A673 (cell line): ENCODE measurements at regions of chr12 and their contacts with region 1.

Region 1: DNA sequence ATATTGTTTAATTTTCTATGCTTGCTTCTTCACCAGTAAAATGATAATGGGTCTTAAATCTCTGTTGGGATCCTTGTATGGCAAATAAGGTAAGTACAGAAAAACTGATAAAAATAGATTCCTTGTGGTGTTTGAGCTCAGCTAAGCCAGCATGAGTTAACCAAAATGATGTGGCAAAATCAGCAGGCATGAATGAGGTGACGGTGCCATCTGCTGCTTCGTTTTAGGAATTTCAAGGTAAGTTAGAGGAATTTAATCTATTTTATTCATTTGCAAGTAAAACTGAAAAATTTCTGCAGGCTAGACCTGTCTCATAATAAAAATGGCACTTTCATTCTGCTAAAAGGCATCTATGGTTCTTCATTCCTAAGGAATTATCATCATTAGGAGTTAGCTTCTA is 10.0 kb upstream of the CLEC7A start:
- DNase-seq: peak; percentile 64
- H3K4me3 ChIP-seq: no peak overlapping the region
- H3K27ac ChIP-seq: no peak overlapping the region
- H3K4me1 ChIP-seq: no peaks in the 10 kb centered on the region
- H3K27me3 ChIP-seq: no peaks in the 10 kb centered on the region
- CTCF ChIP-seq: peak; percentile 61

Region 2: GRCh38 chr12:9797722-9798619 is 342.0 kb before region 1 on chr12:
- CTCF ChIA-PET with region 1: no interaction called
- POLR2A ChIA-PET with region 1: no interaction called
- intact Hi-C with region 1: no loop called
- DNase-seq: peak; percentile 53
- H3K4me3 ChIP-seq: no peak overlapping the region
- H3K27ac ChIP-seq: no peak overlapping the region
- H3K4me1 ChIP-seq: peaks cover 12% of the 10 kb centered on the region
- H3K27me3 ChIP-seq: no peaks in the 10 kb centered on the region
- CTCF ChIP-seq: peak; percentile 50

Region 3: DNA sequence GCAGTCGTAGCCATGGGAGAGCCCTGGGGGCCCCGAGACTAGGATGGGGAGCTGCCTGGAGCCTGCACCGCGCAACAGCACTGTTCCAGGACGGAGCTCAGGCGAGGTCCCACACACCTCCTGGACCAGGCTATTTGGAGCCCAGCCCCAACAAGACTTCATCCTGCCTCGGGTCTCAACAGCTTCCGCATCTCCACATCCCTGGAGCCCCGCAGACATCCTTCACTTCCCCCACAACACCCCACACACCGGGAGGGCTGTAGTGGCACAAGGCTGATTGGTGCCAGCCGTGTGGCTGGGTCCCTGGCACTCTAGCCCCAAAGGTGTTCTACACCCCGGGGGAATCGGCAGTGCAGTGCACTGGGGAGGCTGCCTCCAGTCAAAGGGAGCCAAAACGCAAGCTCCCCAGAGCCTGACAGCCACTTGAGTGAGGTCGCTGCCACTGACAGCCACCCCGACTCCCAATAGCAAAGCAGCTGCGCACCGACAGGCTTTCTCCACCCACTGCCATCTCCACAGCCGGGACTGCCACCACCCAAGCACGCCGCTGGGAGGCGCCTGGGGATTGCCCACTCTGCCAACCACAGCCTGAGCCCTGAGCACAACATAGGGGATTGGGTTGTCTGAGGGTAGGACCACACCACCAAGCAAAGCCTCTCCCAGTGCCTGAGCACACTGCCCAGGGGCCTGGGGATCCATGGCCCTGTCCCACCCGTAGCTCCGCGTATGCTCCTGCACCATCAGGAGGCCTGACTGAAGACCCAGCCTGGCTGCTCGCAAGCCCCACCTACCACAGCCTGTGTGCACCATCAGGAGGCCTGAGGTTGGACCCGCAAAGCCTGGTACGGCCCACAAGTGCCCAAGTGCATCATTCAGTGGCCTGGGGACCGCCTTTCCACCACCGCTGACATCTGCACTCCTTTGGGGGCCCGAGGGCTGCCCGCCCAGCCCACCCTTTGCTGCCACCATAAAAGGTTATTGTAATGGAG is 325.9 kb before region 1 on chr12:
- CTCF ChIA-PET with region 1: no interaction called
- POLR2A ChIA-PET with region 1: no interaction called
- intact Hi-C with region 1: loop called (anchors 5 kb)
- DNase-seq: peak; percentile 81
- H3K4me3 ChIP-seq: peak overlapping the region; percentile 27
- H3K27ac ChIP-seq: no peak overlapping the region
- H3K4me1 ChIP-seq: peaks cover 5% of the 10 kb centered on the region
- H3K27me3 ChIP-seq: no peaks in the 10 kb centered on the region
- CTCF ChIP-seq: peak; percentile 97

Region 4: GRCh38 chr12:9940375-9940774 is 199.6 kb before region 1 on chr12:
- CTCF ChIA-PET with region 1: no interaction called
- POLR2A ChIA-PET with region 1: no interaction called
- intact Hi-C with region 1: loop called (anchors 5 kb)
- DNase-seq: peak; percentile 10
- H3K4me3 ChIP-seq: no peak overlapping the region
- H3K27ac ChIP-seq: no peak overlapping the region
- H3K4me1 ChIP-seq: peaks cover 10% of the 10 kb centered on the region
- H3K27me3 ChIP-seq: peaks cover 51% of the 10 kb centered on the region
- CTCF ChIP-seq: peak; percentile 60

Region 5: DNA sequence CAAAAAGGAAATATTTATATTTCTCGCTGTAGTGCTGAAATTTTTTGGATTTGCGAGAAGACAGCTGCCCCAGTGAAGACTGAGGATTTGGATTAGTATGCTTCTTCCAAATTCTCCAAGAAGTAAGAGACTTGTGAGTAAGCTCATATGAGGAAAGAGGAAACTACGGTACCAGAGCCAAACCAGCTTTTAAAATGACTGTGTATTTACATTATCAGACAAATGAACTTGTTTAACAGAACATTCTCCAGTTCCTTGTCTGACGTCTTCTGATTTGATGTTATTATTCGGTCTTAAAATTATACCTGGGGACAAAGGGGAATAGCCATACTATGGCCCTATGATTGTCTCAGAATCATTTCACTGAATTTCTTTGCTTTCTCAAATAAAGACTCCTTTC is 121.6 kb before region 1 on chr12:
- CTCF ChIA-PET with region 1: no interaction called
- POLR2A ChIA-PET with region 1: no interaction called
- intact Hi-C with region 1: no loop called
- DNase-seq: no peak
- H3K4me3 ChIP-seq: no peak overlapping the region
- H3K27ac ChIP-seq: no peak overlapping the region
- H3K4me1 ChIP-seq: peaks cover 13% of the 10 kb centered on the region
- H3K27me3 ChIP-seq: peaks cover 3% of the 10 kb centered on the region
- CTCF ChIP-seq: no peak

Region 6: DNA sequence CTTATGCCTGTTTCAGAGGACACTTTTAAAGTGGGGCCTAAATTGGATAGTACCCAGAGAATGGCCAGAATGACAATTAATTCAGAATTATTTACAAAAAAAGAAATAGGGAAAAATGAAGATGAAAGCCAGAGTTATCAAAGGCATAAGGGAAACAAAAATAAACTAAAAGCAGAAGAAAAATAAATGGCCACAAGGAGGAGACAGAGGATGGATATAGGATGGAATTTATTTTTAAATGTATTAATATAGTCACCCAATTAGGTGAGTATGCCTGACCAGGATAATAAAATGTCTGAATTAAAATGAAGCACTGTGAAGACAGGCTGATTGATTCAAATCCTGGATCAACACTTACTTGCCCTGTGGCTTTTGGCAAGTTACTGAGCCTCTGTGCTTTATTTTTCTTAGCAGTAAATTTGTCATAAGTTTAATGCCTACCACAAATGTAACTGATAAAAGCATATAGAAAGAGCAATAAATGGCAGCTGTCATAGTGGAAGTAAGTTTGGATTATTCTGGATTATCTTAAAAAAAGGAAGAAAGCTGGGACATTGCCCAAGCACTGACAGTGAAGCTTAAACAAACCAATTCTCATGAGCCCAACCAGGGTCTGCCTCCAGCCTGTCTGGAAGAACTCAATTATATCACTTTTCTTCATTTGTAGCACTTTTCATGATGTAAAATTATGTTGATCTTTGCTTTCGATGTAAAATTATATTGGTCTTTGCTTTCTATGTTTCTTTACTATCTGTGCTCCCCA is 106.0 kb before region 1 on chr12:
- CTCF ChIA-PET with region 1: interaction called, 5 read pairs
- POLR2A ChIA-PET with region 1: no interaction called
- intact Hi-C with region 1: loop called (anchors 1 kb)
- DNase-seq: peak; percentile 30
- H3K4me3 ChIP-seq: no peak overlapping the region
- H3K27ac ChIP-seq: no peak overlapping the region
- H3K4me1 ChIP-seq: no peaks in the 10 kb centered on the region
- H3K27me3 ChIP-seq: no peaks in the 10 kb centered on the region
- CTCF ChIP-seq: peak; percentile 64